Panc1 (cell line): ENCODE measurements at regions of chr2 and their contacts with region 1.

Region 1: DNA sequence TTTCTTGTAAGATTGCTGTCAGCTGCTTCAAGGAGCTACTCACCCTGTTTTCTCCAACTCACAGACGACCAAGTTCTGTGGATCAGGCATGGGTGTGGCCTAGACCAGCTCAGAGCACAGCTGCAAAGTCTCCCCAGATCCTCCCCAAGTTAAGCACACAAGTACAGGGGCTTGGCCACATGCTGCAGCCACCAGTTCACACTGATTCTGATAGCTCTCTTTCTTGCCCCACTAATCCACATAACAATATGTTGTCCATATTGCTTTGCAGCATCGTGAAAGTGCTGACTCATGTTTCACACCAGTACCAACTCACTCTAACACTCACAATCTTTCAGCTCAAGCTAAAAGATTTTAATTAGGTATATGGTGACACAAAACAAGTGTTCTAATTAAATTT is 437.0 kb downstream of the PARD3B start:
- DNase-seq: no peak
- ATAC-seq: no peak
- H3K4me3 ChIP-seq: no peak overlapping the region
- H3K27ac ChIP-seq: peak overlapping the region; percentile 21; the same call in 1 of the 2 replicates
- H3K4me1 ChIP-seq: no peaks in the 10 kb centered on the region
- H3K27me3 ChIP-seq: no peaks in the 10 kb centered on the region
- CTCF ChIP-seq: no peak

Region 2: DNA sequence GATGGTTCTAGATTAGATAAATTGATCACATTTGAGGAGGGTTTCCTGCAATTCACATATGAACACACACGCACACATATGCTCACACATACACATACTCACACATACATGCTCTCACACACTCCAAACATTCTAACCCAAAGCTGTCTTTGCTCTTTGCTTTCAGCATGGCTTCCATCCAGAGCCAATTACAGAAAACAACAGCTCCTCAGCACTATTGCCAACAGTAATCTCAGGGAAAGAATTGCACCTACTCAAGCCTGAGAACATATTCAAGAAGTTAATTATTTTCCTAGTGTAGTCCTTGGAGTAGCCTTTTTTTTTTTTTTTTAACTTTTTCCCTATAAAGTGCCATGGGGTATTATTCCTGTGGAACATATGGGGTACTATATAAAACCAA is 683.9 kb before region 1 on chr2:
- CTCF ChIA-PET with region 1: interaction called, 10 read pairs
- POLR2A ChIA-PET with region 1: no interaction called
- in situ Hi-C with region 1: no loop called
- intact Hi-C with region 1: no loop called
- DNase-seq: no peak
- ATAC-seq: no peak
- H3K4me3 ChIP-seq: no peak overlapping the region
- H3K27ac ChIP-seq: no peak overlapping the region
- H3K4me1 ChIP-seq: no peaks in the 10 kb centered on the region
- H3K27me3 ChIP-seq: no peaks in the 10 kb centered on the region
- CTCF ChIP-seq: no peak